WTC11 (cell line): ENCODE measurements at regions of chr3 and their contacts with region 1.

Region 1: DNA sequence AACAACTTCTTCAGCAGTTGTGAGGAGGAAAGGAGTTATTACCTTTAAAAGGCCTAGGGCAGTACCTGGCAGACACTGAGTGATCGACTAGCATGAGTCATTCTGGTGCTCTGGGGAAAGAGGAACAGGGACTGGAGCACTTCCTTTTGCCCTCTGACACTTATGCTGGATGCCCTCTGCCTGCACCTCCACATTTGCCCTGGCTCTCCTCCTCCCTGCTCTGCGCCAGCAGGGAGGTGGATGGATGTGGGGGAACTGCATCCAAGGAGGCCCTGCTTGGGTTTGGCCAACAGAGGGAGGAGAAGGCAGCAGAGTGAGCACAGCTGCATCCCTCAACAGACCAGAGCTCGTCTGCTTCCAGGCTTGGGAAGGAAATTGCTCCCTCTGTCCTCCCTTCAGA is 75.1 kb downstream of the SEMA5B start:
- DNase-seq: peak; percentile 27
- ATAC-seq: peak; percentile 71
- H3K4me3 Mint-ChIP-seq: no peak overlapping the region
- H3K27ac Mint-ChIP-seq: no peak overlapping the region
- H3K4me1 Mint-ChIP-seq: peaks cover 36% of the 10 kb centered on the region
- H3K27me3 Mint-ChIP-seq: no peaks in the 10 kb centered on the region
- CTCF ChIP-seq: no peak

Region 2: GRCh38 chr3:122986693-122987179 is 34.2 kb after region 1 on chr3:
- CTCF ChIA-PET with region 1: interaction called, 11 read pairs
- POLR2A ChIA-PET with region 1: no interaction called
- DNase-seq: peak; percentile 74
- ATAC-seq: peak; percentile 53
- H3K4me3 Mint-ChIP-seq: peak overlapping the region; percentile 51
- H3K27ac Mint-ChIP-seq: peak overlapping the region; percentile 97
- H3K4me1 Mint-ChIP-seq: peaks cover 71% of the 10 kb centered on the region
- H3K27me3 Mint-ChIP-seq: no peaks in the 10 kb centered on the region
- CTCF ChIP-seq: no peak

Region 3: DNA sequence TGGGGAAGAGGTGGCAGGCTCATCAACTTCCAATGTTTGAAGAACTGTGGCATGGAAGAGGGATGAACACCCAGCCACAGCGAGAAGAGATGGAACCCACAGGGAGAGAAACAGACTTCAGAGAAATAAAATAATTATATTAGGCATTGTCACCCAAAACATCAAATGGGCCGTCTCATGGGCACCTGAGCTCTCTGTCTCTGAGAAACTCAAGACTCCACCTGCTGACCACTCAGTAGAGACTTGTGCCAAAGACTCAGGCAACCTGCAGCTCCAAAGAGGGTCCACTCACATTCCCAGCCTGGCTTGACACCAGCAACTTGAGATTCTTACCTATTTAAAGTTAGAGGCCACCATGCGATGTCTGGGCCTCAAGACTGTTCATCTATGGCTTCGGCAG is 63.0 kb after region 1 on chr3:
- CTCF ChIA-PET with region 1: interaction called, 25 read pairs
- POLR2A ChIA-PET with region 1: no interaction called
- DNase-seq: no peak
- ATAC-seq: peak; percentile 70
- H3K4me3 Mint-ChIP-seq: no peak overlapping the region
- H3K27ac Mint-ChIP-seq: no peak overlapping the region
- H3K4me1 Mint-ChIP-seq: peaks cover 12% of the 10 kb centered on the region
- H3K27me3 Mint-ChIP-seq: no peaks in the 10 kb centered on the region
- CTCF ChIP-seq: no peak

Region 4: GRCh38 chr3:123021996-123022510 is 69.5 kb after region 1 on chr3:
- CTCF ChIA-PET with region 1: interaction called, 29 read pairs
- POLR2A ChIA-PET with region 1: no interaction called
- DNase-seq: no peak
- ATAC-seq: no peak
- H3K4me3 Mint-ChIP-seq: peak overlapping the region; percentile 39
- H3K27ac Mint-ChIP-seq: peak overlapping the region; percentile 77; the same call in 1 of the 2 replicates
- H3K4me1 Mint-ChIP-seq: peaks cover 55% of the 10 kb centered on the region
- H3K27me3 Mint-ChIP-seq: peaks cover 28% of the 10 kb centered on the region
- CTCF ChIP-seq: no peak